GM10248 (cell line): ENCODE measurements at regions of chr1 and their contacts with region 1.

Region 1: GRCh38 chr1:58755468-58755872 is 28.4 kb downstream of the JUN start:
- DNase-seq: peak; percentile 44
- CTCF ChIP-seq: no peak

Region 2: GRCh38 chr1:58739856-58740466 is 15.5 kb before region 1 on chr1:
- CTCF ChIA-PET with region 1: interaction called, 18 read pairs
- POLR2A ChIA-PET with region 1: interaction called, 5 read pairs
- DNase-seq: peak; percentile 70
- CTCF ChIP-seq: peak; percentile 56

Region 3: GRCh38 chr1:58768191-58768731 is 12.8 kb after region 1 on chr1:
- CTCF ChIA-PET with region 1: interaction called, 10 read pairs
- POLR2A ChIA-PET with region 1: no interaction called
- DNase-seq: no peak
- CTCF ChIP-seq: no peak